Heart left ventricle (tissue), 16 donors: ENCODE measurements at regions of chr17 and their contacts with region 1.

Region 1: DNA sequence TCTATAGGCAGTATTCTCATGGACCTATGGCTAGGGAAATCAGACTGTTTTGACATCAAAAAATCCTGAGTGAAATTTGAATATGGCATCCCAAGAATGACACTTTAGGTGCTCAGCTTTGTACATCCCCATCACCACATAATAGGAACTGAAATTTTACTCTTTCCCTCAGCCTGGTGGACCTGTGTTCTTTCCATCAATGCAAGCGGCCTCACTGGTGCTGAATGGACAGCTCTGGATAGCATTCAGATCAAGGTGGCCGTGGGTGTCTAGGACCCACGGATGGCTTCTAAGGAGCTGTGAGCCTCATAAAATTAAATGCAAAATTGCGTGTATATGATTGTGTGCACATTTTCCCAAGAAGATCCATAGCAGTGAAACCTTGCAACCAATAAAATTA is 152.6 kb downstream of the MAP2K6 start:
- DNase-seq: no peak
- ATAC-seq: no peak
- H3K4me3 ChIP-seq: no peak overlapping the region
- H3K27ac ChIP-seq: no peak overlapping the region
- H3K4me1 ChIP-seq: peaks cover 0 to 3% (median 0%) of the 10 kb centered on the region in 12 donors
- H3K27me3 ChIP-seq: no peaks in the 10 kb centered on the region
- CTCF ChIP-seq: no peak
- POLR2A ChIP-seq: no peak

Region 2: DNA sequence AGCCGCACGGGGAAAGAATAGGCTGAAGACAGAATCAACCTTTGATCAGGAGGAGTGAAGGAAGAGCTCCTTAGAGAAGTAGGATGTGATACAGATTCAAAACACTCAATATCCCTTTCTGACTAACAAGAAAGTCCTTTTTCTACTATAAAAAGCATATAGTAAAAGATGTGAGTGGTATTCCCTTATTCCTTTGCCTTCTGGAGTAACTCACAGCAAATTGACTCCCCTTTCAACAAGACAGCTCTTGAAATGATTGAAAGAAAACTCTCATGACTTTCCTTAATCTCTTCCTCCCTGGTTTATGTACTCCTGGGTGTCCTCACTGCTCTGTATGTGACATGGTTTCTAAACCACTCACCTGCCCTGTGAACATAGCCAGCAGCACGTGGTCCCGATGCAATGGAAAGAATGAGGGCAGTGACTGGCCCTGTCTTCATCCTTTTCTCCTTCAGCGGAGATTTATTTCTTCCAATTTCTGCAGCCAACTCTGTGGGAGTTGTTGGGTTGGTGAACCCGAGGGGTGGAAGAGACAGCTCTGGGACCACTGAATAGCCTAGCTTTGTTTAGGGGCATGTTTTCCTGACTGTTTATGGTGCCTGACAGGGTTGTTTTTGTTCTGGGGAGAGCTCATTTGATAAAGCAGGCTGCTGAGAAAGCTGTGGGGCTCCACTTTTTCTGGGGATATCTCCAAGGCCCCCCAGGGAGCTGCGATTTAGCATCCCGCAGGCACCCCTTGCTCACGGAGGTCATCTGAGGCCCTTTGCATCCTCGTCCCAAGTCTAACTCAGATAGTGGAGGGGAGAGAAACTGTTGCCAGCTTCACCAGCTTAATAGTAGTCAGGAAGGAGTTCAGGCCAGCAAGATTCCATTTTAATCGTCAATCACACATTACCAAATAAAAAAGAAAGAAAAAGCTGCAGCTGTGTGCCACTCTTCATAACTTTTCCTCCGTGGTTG is 105.9 kb before region 1 on chr17:
- intact Hi-C with region 1: no loop called
- DNase-seq: no peak
- ATAC-seq: peak in 1 of 4 donors; percentile 39
- H3K4me3 ChIP-seq: no peak overlapping the region
- H3K27ac ChIP-seq: no peak overlapping the region
- H3K4me1 ChIP-seq: peaks cover 0 to 11% (median 0%) of the 10 kb centered on the region in 12 donors
- H3K27me3 ChIP-seq: no peaks in the 10 kb centered on the region
- CTCF ChIP-seq: no peak
- POLR2A ChIP-seq: no peak

Region 3: GRCh38 chr17:69501591-69502468 is 65.3 kb before region 1 on chr17:
- intact Hi-C with region 1: loop called in 1 of 10 experiments (anchors 10 kb)
- DNase-seq: peak in 3 of 5 donors; percentile 15 to 31 (median 27)
- ATAC-seq: peak; percentile 38 to 78 (median 52)
- H3K4me3 ChIP-seq: peak overlapping the region in 10 of 12 donors; percentile 8 to 47 (median 29)
- H3K27ac ChIP-seq: peak overlapping the region in 11 of 12 donors; percentile 7 to 52 (median 27)
- H3K4me1 ChIP-seq: peaks cover 0 to 31% (median 10%) of the 10 kb centered on the region in 12 donors
- H3K27me3 ChIP-seq: no peaks in the 10 kb centered on the region
- CTCF ChIP-seq: no peak
- POLR2A ChIP-seq: no peak

Region 4: DNA sequence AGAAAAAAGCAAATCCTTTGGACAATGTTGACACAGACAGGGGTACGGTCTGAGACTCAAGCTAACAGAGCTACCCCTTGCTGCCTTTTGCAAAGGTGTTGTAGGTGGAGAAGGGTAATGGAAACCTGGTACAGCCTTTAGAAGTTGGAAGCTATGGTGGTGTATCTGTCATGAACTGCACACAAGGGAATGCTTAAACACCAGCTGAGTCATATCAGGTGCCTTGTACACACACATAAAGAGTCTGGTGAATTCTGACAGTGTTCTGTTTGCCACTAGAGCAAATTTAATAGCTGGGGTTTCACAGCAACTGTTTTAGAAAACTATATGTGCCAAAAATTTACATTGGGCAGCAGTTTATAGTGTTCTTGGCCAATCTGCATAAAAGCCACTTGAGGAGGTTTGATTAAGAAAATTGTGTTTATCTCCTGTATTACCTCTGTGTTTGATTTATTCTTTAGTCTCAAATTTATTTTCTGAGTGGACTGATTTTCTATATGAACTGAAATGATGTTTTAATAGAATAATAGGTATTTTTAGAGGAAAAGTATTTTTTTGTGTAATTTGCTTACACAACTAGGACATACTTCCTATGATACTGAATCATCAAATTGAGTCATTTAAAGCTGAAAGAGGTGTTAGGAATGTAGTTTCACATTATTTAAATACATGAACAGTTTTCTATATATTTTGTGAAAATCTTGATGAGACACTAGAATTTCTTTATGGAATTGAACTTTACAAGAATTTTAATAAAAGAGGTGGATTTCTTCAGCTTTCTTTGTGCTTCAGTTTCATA is 15.7 kb before region 1 on chr17:
- intact Hi-C with region 1: no loop called
- DNase-seq: no peak
- ATAC-seq: no peak
- H3K4me3 ChIP-seq: no peak overlapping the region
- H3K27ac ChIP-seq: no peak overlapping the region
- H3K4me1 ChIP-seq: no peaks in the 10 kb centered on the region
- H3K27me3 ChIP-seq: no peaks in the 10 kb centered on the region
- CTCF ChIP-seq: no peak
- POLR2A ChIP-seq: no peak

Region 5: GRCh38 chr17:70629902-70630301 is 1062.8 kb after region 1 on chr17:
- intact Hi-C with region 1: loop called in 1 of 10 experiments (anchors 5 kb)
- DNase-seq: no peak
- ATAC-seq: no peak
- H3K4me3 ChIP-seq: no peak overlapping the region
- H3K27ac ChIP-seq: no peak overlapping the region
- H3K4me1 ChIP-seq: no peaks in the 10 kb centered on the region
- H3K27me3 ChIP-seq: no peaks in the 10 kb centered on the region
- CTCF ChIP-seq: peak in 11 of 12 donors; percentile 20 to 51 (median 41)
- POLR2A ChIP-seq: no peak